PC-9 (cell line): ENCODE measurements at regions of chr11 and their contacts with region 1.

Region 1: GRCh38 chr11:85619497-85619896 is 7.6 kb downstream of the DLG2 start:
- DNase-seq: no peak
- H3K4me3 ChIP-seq: no peak overlapping the region
- H3K27ac ChIP-seq: no peak overlapping the region
- H3K4me1 ChIP-seq: no peaks in the 10 kb centered on the region
- H3K27me3 ChIP-seq: no peaks in the 10 kb centered on the region
- CTCF ChIP-seq: no peak

Region 2: GRCh38 chr11:85776951-85777606 is 157.6 kb after region 1 on chr11:
- CTCF ChIA-PET with region 1: no interaction called
- POLR2A ChIA-PET with region 1: interaction called, 11 read pairs
- intact Hi-C with region 1: no loop called
- DNase-seq: peak; percentile 14 to 80
- H3K4me3 ChIP-seq: peak overlapping the region; percentile 20; the same call in 1 of the 2 replicates
- H3K27ac ChIP-seq: peak overlapping the region; percentile 72
- H3K4me1 ChIP-seq: peaks cover 35% of the 10 kb centered on the region
- H3K27me3 ChIP-seq: no peaks in the 10 kb centered on the region
- CTCF ChIP-seq: no peak

Region 3: DNA sequence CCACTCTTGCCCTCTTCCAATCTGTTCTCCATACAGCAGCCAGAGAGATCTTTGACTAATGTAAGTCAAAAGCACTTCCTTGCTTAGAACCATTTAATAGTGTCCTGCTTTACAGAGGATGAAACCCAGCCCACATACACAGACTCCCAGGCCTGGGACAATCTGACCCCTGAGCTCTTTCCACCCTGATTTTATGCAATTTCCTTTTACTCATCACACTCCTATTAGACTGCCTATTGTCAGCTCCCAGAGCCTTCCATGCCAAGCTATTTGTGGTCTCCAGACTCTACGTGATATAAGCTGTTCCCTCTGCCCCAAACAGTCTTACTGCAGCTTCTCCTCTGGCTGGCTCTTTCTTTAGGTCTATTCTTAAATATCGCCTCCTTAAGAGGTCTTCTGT is 1024.8 kb after region 1 on chr11:
- CTCF ChIA-PET with region 1: no interaction called
- POLR2A ChIA-PET with region 1: no interaction called
- intact Hi-C with region 1: no loop called
- DNase-seq: no peak
- H3K4me3 ChIP-seq: no peak overlapping the region
- H3K27ac ChIP-seq: no peak overlapping the region
- H3K4me1 ChIP-seq: peaks cover 21% of the 10 kb centered on the region
- H3K27me3 ChIP-seq: no peaks in the 10 kb centered on the region
- CTCF ChIP-seq: no peak